ENCODE measurements at regions of chr12 and their contacts with region 1.

Region 1: GRCh38 chr12:47715393-47715876 is 9.6 kb upstream of the RPAP3 start:
- DNase-seq: peak; percentile 74
- ATAC-seq: peak; percentile 87
- H3K4me3 ChIP-seq: no peak overlapping the region
- H3K27ac ChIP-seq: no peak overlapping the region
- H3K4me1 ChIP-seq: peaks cover 0 to 7% of the 10 kb centered on the region in 2 experiments; a peak in 1 of 4 replicates
- H3K27me3 ChIP-seq: no peaks in the 10 kb centered on the region
- CTCF ChIP-seq: peak; percentile 70 to 90 (median 86)
- POLR2A ChIP-seq: no peak
- RAD21 ChIP-seq: peak; percentile 95

Region 2: GRCh38 chr12:47517122-47517521 is 198.3 kb before region 1 on chr12:
- CTCF ChIA-PET with region 1: no interaction called
- POLR2A ChIA-PET with region 1: no interaction called
- RAD21 ChIA-PET with region 1: no interaction called
- intact Hi-C with region 1: no loop called
- DNase-seq: no peak
- ATAC-seq: no peak
- H3K4me3 ChIP-seq: no peak overlapping the region
- H3K27ac ChIP-seq: no peak overlapping the region
- H3K4me1 ChIP-seq: no peaks in the 10 kb centered on the region
- H3K27me3 ChIP-seq: no peaks in the 10 kb centered on the region
- CTCF ChIP-seq: no peak
- POLR2A ChIP-seq: no peak
- RAD21 ChIP-seq: no peak

Region 3: DNA sequence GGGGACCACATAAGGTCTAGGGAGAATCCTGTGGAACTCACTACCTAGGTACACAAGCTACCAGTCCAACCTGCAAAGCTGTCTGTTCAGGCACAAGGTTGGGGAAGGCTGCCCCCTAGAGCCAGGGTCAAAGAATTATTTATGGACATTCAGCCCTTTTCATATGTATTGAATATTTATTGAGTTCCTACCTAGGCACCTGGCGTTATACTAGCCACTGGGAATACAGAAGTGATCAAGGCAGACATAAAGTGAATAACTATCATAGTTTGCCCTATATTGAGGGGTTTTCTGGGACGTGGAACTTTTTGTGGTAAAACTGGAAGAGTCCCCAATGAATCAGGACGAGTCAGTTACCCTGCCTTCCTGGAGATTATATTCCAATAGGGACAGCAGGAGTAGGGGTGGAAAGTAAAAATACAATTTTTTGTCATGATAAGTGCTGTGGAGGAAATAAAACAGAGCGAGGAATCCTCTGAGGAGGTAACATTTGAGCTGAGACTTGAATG is 51.8 kb after region 1 on chr12:
- CTCF ChIA-PET with region 1: interaction called, 17 read pairs
- POLR2A ChIA-PET with region 1: no interaction called
- RAD21 ChIA-PET with region 1: interaction called in 1 of 2 experiments, 4 read pairs
- intact Hi-C with region 1: loop called (anchors 1 kb)
- DNase-seq: peak; percentile 52
- ATAC-seq: peak; percentile 83
- H3K4me3 ChIP-seq: no peak overlapping the region
- H3K27ac ChIP-seq: no peak overlapping the region
- H3K4me1 ChIP-seq: peaks cover 12 to 24% of the 10 kb centered on the region in 2 experiments
- H3K27me3 ChIP-seq: no peaks in the 10 kb centered on the region
- CTCF ChIP-seq: peak; percentile 71 to 90 (median 71)
- POLR2A ChIP-seq: no peak
- RAD21 ChIP-seq: peak; percentile 90

Region 4: GRCh38 chr12:47779301-47779942 is 64.0 kb after region 1 on chr12:
- CTCF ChIA-PET with region 1: interaction called, 11 read pairs
- POLR2A ChIA-PET with region 1: no interaction called
- RAD21 ChIA-PET with region 1: interaction called in 1 of 2 experiments, 3 read pairs
- intact Hi-C with region 1: loop called (anchors 1 kb)
- DNase-seq: peak; percentile 61
- ATAC-seq: peak; percentile 89
- H3K4me3 ChIP-seq: no peak overlapping the region
- H3K27ac ChIP-seq: no peak overlapping the region
- H3K4me1 ChIP-seq: peaks cover 17 to 39% of the 10 kb centered on the region in 2 experiments
- H3K27me3 ChIP-seq: no peaks in the 10 kb centered on the region
- CTCF ChIP-seq: peak; percentile 91 to 97 (median 94)
- POLR2A ChIP-seq: no peak
- RAD21 ChIP-seq: peak; percentile 94

Region 5: GRCh38 chr12:47949441-47950308 is 234.2 kb after region 1 on chr12:
- CTCF ChIA-PET with region 1: no interaction called
- POLR2A ChIA-PET with region 1: no interaction called
- RAD21 ChIA-PET with region 1: no interaction called
- intact Hi-C with region 1: loop called (anchors 1 kb)
- DNase-seq: peak; percentile 69
- ATAC-seq: peak; percentile 98
- H3K4me3 ChIP-seq: no peak overlapping the region
- H3K27ac ChIP-seq: no peak overlapping the region; the same call in 1 of the 2 replicates
- H3K4me1 ChIP-seq: peaks cover 12 to 46% of the 10 kb centered on the region in 2 experiments; a peak in 3 of 4 replicates
- H3K27me3 ChIP-seq: no peaks in the 10 kb centered on the region
- CTCF ChIP-seq: peak; percentile 85 to 96 (median 91)
- POLR2A ChIP-seq: no peak
- RAD21 ChIP-seq: peak; percentile 89

Region 6: DNA sequence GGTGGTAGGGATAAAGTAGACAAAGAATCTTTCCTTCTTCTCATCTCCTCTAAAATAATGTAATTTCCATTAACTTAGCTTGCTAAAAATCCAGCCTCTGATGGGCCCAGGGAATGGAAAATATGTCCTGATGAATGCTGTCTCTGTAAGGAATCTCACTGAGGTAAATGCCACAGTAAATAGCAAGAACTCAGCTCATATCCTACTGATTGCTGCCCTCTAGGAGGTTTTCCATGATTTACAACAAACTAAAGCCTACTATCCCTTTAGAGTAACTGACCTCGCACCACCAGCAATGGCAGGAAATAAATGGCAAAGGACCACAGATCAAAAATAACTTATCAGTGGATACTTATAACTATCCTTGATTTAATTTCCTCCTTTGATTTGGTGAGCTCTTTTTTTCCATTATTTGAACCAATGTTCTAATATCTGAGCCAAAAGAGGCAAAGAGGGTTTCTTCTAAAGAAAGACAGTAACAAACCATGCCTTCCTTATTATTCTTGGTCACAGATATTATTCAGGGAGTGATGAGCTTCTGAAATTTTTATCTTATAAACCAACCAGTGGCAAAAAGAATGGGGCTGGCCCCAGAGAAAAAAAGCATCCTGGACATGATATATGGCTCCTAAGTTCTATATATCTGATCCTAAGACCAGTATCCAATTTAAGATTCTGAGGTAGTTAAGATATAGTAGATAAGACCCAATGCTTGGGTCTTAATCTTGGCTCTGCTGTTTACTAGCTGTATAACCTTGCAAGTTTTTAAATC is 346.7 kb after region 1 on chr12:
- CTCF ChIA-PET with region 1: no interaction called
- POLR2A ChIA-PET with region 1: no interaction called
- RAD21 ChIA-PET with region 1: no interaction called
- intact Hi-C with region 1: no loop called
- DNase-seq: no peak
- ATAC-seq: no peak
- H3K4me3 ChIP-seq: no peak overlapping the region
- H3K27ac ChIP-seq: no peak overlapping the region
- H3K4me1 ChIP-seq: no peaks in the 10 kb centered on the region
- H3K27me3 ChIP-seq: no peaks in the 10 kb centered on the region
- CTCF ChIP-seq: 0 out of 6 replicates have a peak, but pooled peaks of 1 of the 3 experiments have one; percentile 3
- POLR2A ChIP-seq: no peak
- RAD21 ChIP-seq: no peak